ENCODE measurements at regions of chr6 and their contacts with region 1.

Region 1: DNA sequence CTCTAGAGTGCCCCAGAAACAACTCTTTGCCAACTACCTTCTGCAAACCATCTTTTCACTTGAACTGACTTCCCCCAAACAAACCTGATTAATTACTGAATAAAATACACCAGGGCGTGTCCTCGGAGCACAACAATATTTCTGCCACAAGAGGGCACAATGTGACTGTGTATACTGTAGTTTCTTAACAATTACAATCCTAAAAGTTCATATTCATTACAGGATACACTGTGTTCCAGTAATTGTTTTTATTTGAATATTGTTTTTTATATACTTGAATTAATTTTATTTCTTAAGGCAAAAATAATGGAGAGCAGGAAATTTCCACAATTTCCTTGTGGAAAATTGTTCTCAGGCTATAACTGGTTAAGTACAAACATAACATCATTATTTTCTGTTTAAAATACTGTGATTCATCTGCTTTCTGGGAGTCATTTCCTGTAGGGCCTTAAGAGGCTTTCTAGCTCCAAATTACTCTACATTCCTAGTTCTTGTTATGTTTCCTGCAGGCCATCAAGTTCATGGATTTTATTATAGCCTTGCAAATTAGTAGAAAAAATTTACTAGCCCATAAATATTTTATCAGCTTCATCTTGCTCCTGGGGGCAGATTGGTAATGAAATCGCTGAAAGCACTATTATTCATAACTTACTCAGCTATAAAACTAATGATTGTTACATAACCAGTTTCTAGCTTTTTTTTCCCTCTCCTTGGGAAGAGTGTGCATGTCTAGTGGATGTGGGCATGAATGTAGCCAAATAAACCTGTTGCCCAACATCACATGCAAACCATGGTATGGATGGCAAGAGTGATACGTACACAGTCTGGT is 51.9 kb upstream of the SLC22A16 start:
- DNase-seq: peak; percentile 74
- ATAC-seq: peak; percentile 47
- H3K4me3 ChIP-seq: no peak overlapping the region
- H3K4me3 Mint-ChIP-seq: no peak overlapping the region
- H3K27ac ChIP-seq: no peak overlapping the region
- H3K27ac Mint-ChIP-seq: no peak overlapping the region
- H3K4me1 ChIP-seq: no peaks in the 10 kb centered on the region
- H3K4me1 Mint-ChIP-seq: no peaks in the 10 kb centered on the region
- H3K27me3 ChIP-seq: peaks cover 0 to 8% (median 0%) of the 10 kb centered on the region in 4 experiments
- H3K27me3 Mint-ChIP-seq: peaks cover 6% of the 10 kb centered on the region
- CTCF ChIP-seq: peak; percentile 91

Region 2: DNA sequence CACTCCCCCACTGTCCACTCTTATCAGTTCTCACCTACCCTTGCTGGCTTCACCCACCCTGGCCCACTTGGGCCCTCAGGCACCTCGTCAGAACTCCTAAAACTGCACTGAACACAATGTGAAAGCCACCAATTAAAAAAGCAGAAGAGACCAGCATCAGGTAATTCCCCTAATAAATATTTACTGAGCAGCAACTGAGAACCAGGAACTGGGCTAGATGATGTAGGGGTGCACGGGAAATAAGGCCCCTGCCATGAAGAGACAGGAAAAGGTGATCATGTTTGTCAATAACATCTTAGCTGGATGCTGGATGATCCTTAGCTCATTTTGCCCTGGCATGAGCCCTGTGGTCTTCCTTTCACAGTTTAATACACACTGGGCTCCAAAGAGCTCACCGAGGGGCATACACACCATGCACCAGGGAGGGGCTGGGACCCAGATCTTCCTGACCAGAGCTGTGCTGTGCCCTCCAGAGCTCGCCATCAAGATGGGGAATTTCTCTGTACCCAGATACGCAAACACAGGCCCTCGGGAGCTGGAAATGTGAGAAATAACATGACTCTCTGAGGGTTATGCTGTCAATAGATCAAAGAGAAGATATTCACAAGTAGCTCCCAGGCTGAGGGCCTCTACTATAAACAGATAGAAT is 61.7 kb after region 1 on chr6:
- CTCF ChIA-PET with region 1: no interaction called
- POLR2A ChIA-PET with region 1: no interaction called
- intact Hi-C with region 1: loop called (anchors 2 kb)
- DNase-seq: peak; percentile 82
- ATAC-seq: peak; percentile 97
- H3K4me3 ChIP-seq: peak overlapping the region in 2 of 5 experiments; percentile 1 to 22
- H3K4me3 Mint-ChIP-seq: peak overlapping the region; percentile 49
- H3K27ac ChIP-seq: peak overlapping the region; percentile 83 to 89
- H3K27ac Mint-ChIP-seq: peak overlapping the region; percentile 95
- H3K4me1 ChIP-seq: peaks cover 12 to 18% of the 10 kb centered on the region in 2 donors
- H3K4me1 Mint-ChIP-seq: peaks cover 17% of the 10 kb centered on the region
- H3K27me3 ChIP-seq: no peaks in the 10 kb centered on the region
- H3K27me3 Mint-ChIP-seq: no peaks in the 10 kb centered on the region
- CTCF ChIP-seq: no peak

Region 3: GRCh38 chr6:110708295-110708950 is 180.1 kb after region 1 on chr6:
- CTCF ChIA-PET with region 1: no interaction called
- POLR2A ChIA-PET with region 1: no interaction called
- intact Hi-C with region 1: no loop called
- DNase-seq: no peak
- ATAC-seq: no peak
- H3K4me3 ChIP-seq: no peak overlapping the region
- H3K4me3 Mint-ChIP-seq: no peak overlapping the region
- H3K27ac ChIP-seq: no peak overlapping the region
- H3K27ac Mint-ChIP-seq: no peak overlapping the region
- H3K4me1 ChIP-seq: no peaks in the 10 kb centered on the region
- H3K4me1 Mint-ChIP-seq: peaks cover 13% of the 10 kb centered on the region
- H3K27me3 ChIP-seq: no peaks in the 10 kb centered on the region
- H3K27me3 Mint-ChIP-seq: no peaks in the 10 kb centered on the region
- CTCF ChIP-seq: no peak

Region 4: GRCh38 chr6:110949679-110950285 is 421.5 kb after region 1 on chr6:
- CTCF ChIA-PET with region 1: interaction called, 29 read pairs
- POLR2A ChIA-PET with region 1: no interaction called
- intact Hi-C with region 1: loop called (anchors 1 kb)
- DNase-seq: peak; percentile 57
- ATAC-seq: no peak
- H3K4me3 ChIP-seq: no peak overlapping the region
- H3K4me3 Mint-ChIP-seq: no peak overlapping the region
- H3K27ac ChIP-seq: no peak overlapping the region
- H3K27ac Mint-ChIP-seq: no peak overlapping the region
- H3K4me1 ChIP-seq: no peaks in the 10 kb centered on the region
- H3K4me1 Mint-ChIP-seq: no peaks in the 10 kb centered on the region
- H3K27me3 ChIP-seq: no peaks in the 10 kb centered on the region
- H3K27me3 Mint-ChIP-seq: peaks cover 2% of the 10 kb centered on the region
- CTCF ChIP-seq: peak; percentile 73

Region 5: DNA sequence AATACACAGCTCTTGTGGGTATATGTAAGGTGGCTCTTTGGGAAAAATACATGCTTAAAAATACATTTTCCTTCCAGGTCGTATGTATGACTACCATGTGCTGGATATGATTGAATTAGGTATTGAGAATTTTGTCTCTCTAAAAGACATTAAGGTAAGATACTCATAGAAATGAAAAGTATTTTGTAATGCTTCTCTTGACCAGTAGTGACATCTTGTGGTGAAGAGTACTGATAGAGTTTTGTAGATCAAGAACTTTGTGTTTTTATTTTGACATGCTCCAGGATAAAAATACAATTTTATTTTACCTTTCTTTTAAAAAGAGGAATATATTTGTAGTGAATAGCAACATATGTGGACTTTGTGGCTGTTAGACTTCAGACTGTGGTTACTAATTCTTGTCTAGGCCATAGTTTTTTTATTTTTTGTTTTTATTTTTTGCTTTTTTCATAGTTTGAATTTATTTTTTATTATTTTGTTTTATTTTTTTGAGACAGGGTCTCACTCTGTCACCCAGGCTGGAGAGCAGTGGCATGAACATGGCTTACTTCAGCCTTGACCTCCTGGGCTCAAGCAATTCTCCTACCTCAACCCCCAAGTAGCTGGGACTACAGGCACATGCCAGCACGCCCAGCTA is 471.4 kb after region 1 on chr6:
- CTCF ChIA-PET with region 1: interaction called, 21 read pairs
- POLR2A ChIA-PET with region 1: no interaction called
- intact Hi-C with region 1: loop called (anchors 1 kb)
- DNase-seq: peak; percentile 42
- ATAC-seq: no peak
- H3K4me3 ChIP-seq: no peak overlapping the region
- H3K4me3 Mint-ChIP-seq: no peak overlapping the region
- H3K27ac ChIP-seq: no peak overlapping the region
- H3K27ac Mint-ChIP-seq: no peak overlapping the region
- H3K4me1 ChIP-seq: no peaks in the 10 kb centered on the region
- H3K4me1 Mint-ChIP-seq: no peaks in the 10 kb centered on the region
- H3K27me3 ChIP-seq: no peaks in the 10 kb centered on the region
- H3K27me3 Mint-ChIP-seq: no peaks in the 10 kb centered on the region
- CTCF ChIP-seq: peak; percentile 65